ENCODE measurements at regions of chr1 and their contacts with region 1.

Region 1: GRCh38 chr1:22234476-22235030 is 91.7 kb upstream of the WNT4 start:
- DNase-seq: no peak
- ATAC-seq: no peak
- H3K4me3 ChIP-seq: no peak overlapping the region
- H3K4me3 Mint-ChIP-seq: no peak overlapping the region
- H3K27ac ChIP-seq: no peak overlapping the region
- H3K27ac Mint-ChIP-seq: no peak overlapping the region
- H3K4me1 ChIP-seq: no peaks in the 10 kb centered on the region
- H3K4me1 Mint-ChIP-seq: no peaks in the 10 kb centered on the region
- H3K27me3 ChIP-seq: peaks cover 0 to 42% of the 10 kb centered on the region in 2 experiments
- H3K27me3 Mint-ChIP-seq: peaks cover 29 to 34% of the 10 kb centered on the region in 2 donors

Region 2: GRCh38 chr1:22330092-22330759 is 95.7 kb after region 1 on chr1:
- CTCF ChIA-PET with region 1: no interaction called
- POLR2A ChIA-PET with region 1: interaction called in 1 of 2 experiments, 17 read pairs
- DNase-seq: no peak
- ATAC-seq: no peak
- H3K4me3 ChIP-seq: no peak overlapping the region
- H3K4me3 Mint-ChIP-seq: no peak overlapping the region
- H3K27ac ChIP-seq: no peak overlapping the region
- H3K27ac Mint-ChIP-seq: no peak overlapping the region
- H3K4me1 ChIP-seq: no peaks in the 10 kb centered on the region
- H3K4me1 Mint-ChIP-seq: no peaks in the 10 kb centered on the region
- H3K27me3 ChIP-seq: peaks cover 0 to 43% of the 10 kb centered on the region in 2 experiments
- H3K27me3 Mint-ChIP-seq: peaks cover 7 to 17% of the 10 kb centered on the region in 2 donors

Measured in T-cell (primary cell).